Colonic mucosa (tissue), 4 donors: ENCODE measurements at regions of chr22 and their contacts with region 1.

Region 1: GRCh38 chr22:37643225-37643847 is 3.9 kb downstream of the SH3BP1 start:
- DNase-seq: peak; percentile 93
- H3K4me3 ChIP-seq: no peak overlapping the region
- H3K27ac ChIP-seq: peak overlapping the region; percentile 79
- H3K4me1 ChIP-seq: peaks cover 17% of the 10 kb centered on the region
- H3K27me3 ChIP-seq: no peaks in the 10 kb centered on the region
- CTCF ChIP-seq: peak; percentile 94

Region 2: GRCh38 chr22:37797874-37798500 is 154.7 kb after region 1 on chr22:
- intact Hi-C with region 1: loop called (anchors 10 kb)
- DNase-seq: no peak
- H3K4me3 ChIP-seq: no peak overlapping the region
- H3K27ac ChIP-seq: no peak overlapping the region
- H3K4me1 ChIP-seq: peaks cover 3% of the 10 kb centered on the region
- H3K27me3 ChIP-seq: no peaks in the 10 kb centered on the region
- CTCF ChIP-seq: no peak